ENCODE measurements at regions of chr1 and their contacts with region 1.

Region 1: GRCh38 chr1:16946646-16947045 is 24.9 kb downstream of the CROCC start:
- DNase-seq: no peak
- ATAC-seq: no peak
- H3K4me3 Mint-ChIP-seq: no peak overlapping the region
- H3K27ac Mint-ChIP-seq: no peak overlapping the region
- H3K4me1 Mint-ChIP-seq: no peaks in the 10 kb centered on the region
- H3K27me3 Mint-ChIP-seq: no peaks in the 10 kb centered on the region

Region 2: GRCh38 chr1:16625497-16626408 is 320.9 kb before region 1 on chr1:
- CTCF ChIA-PET with region 1: interaction called, 11 read pairs
- DNase-seq: no peak
- ATAC-seq: no peak
- H3K4me3 Mint-ChIP-seq: no peak overlapping the region
- H3K27ac Mint-ChIP-seq: no peak overlapping the region
- H3K4me1 Mint-ChIP-seq: peaks cover 6% of the 10 kb centered on the region
- H3K27me3 Mint-ChIP-seq: no peaks in the 10 kb centered on the region

Region 3: GRCh38 chr1:16967095-16967575 is 20.5 kb after region 1 on chr1:
- CTCF ChIA-PET with region 1: interaction called, 11 read pairs
- DNase-seq: no peak
- ATAC-seq: no peak
- H3K4me3 Mint-ChIP-seq: no peak overlapping the region
- H3K27ac Mint-ChIP-seq: no peak overlapping the region
- H3K4me1 Mint-ChIP-seq: no peaks in the 10 kb centered on the region
- H3K27me3 Mint-ChIP-seq: no peaks in the 10 kb centered on the region

Region 4: DNA sequence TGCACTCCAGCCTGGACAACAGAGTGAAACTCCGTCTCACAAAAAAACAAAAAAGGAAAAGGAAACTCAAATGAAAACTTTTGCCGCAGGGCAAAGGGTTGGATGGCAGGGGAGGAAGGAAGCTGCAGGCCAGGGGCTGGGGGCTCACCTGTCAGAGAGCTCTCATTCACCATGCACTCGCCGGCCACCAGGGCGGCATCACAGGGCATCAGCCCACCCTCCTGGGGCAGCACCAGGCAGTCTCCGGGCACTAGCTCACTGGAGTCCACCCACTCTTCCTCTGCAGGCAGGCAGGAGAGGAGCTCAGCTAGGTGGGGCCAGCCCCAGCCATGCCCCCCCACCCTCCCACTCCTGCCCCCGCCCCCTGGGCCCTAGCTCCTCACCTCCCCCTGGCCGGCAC is 53.2 kb after region 1 on chr1:
- CTCF ChIA-PET with region 1: no interaction called
- DNase-seq: no peak
- ATAC-seq: no peak
- H3K4me3 Mint-ChIP-seq: no peak overlapping the region
- H3K27ac Mint-ChIP-seq: no peak overlapping the region
- H3K4me1 Mint-ChIP-seq: no peaks in the 10 kb centered on the region
- H3K27me3 Mint-ChIP-seq: no peaks in the 10 kb centered on the region

Region 5: GRCh38 chr1:17045634-17046333 is 99.1 kb after region 1 on chr1:
- CTCF ChIA-PET with region 1: interaction called, 33 read pairs
- DNase-seq: no peak
- ATAC-seq: peak; percentile 33
- H3K4me3 Mint-ChIP-seq: no peak overlapping the region
- H3K27ac Mint-ChIP-seq: peak overlapping the region; percentile 1
- H3K4me1 Mint-ChIP-seq: peaks cover 16% of the 10 kb centered on the region
- H3K27me3 Mint-ChIP-seq: no peaks in the 10 kb centered on the region

Region 6: GRCh38 chr1:17176306-17177061 is 229.8 kb after region 1 on chr1:
- CTCF ChIA-PET with region 1: no interaction called
- DNase-seq: no peak
- ATAC-seq: no peak
- H3K4me3 Mint-ChIP-seq: no peak overlapping the region
- H3K27ac Mint-ChIP-seq: no peak overlapping the region
- H3K4me1 Mint-ChIP-seq: peaks cover 12% of the 10 kb centered on the region
- H3K27me3 Mint-ChIP-seq: peaks cover 46% of the 10 kb centered on the region

Measured in activated CD8-positive, alpha-beta memory T cell treated with anti-CD3 and anti-CD28 coated beads, Interleukin-2, amount 10 ng/mL, durations not matched to agents 7 days and 5 days (primary cell).